ENCODE measurements at regions of chr20 and their contacts with region 1.

Region 1: GRCh38 chr20:4607287-4607713 is 114.4 kb upstream of the PRND start:
- DNase-seq: no peak
- ATAC-seq: peak; percentile 84 to 93 (median 88)
- H3K4me3 ChIP-seq: peak overlapping the region; percentile 19
- H3K27ac ChIP-seq: no peak overlapping the region
- H3K4me1 ChIP-seq: no peaks in the 10 kb centered on the region
- H3K27me3 ChIP-seq: peaks cover 0 to 18% (median 1%) of the 10 kb centered on the region in 3 donors
- CTCF ChIP-seq: peak; percentile 95

Region 2: DNA sequence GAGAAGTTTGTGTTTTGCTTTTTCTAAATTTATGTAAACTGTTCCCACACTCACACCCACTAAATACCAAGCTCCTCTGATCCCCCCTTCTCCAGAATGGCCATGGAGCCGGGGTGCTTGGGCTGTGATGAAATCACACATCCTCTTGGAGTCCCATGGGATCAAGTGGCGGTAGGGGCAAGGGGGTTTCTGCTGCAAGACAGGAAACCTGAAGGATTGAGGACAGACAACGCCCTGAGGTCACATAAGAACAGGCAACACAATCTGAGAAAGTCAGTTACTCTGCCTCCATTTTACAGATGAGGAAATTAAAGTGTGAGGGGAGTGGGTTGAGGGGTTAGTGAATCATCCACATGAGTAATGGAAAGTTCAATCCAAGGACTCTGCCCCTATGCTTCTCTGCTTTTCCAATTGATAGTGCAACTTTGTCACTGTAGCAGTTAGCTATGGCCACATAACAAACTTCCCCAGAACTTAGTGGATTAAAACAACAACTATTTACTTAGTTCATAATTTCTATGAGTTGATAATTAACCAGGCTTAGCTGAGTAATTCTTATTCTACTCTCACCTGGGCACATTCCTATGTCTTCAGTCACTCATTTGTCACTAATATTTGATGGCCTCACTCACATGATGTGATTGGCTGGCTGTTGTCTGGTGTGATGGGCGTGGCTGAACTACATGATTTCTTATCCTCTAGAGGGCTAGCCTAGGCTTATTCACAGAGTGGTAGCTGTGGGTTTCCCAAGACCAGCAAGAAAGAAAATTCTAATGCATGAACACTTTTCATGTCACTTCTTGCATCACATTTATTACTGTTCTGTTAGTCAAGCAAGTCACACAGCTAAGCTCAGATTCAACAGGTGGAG is 280.9 kb before region 1 on chr20:
- intact Hi-C with region 1: no loop called
- DNase-seq: no peak
- ATAC-seq: no peak
- H3K4me3 ChIP-seq: no peak overlapping the region
- H3K27ac ChIP-seq: no peak overlapping the region
- H3K4me1 ChIP-seq: no peaks in the 10 kb centered on the region
- H3K27me3 ChIP-seq: no peaks in the 10 kb centered on the region
- CTCF ChIP-seq: no peak

Region 3: DNA sequence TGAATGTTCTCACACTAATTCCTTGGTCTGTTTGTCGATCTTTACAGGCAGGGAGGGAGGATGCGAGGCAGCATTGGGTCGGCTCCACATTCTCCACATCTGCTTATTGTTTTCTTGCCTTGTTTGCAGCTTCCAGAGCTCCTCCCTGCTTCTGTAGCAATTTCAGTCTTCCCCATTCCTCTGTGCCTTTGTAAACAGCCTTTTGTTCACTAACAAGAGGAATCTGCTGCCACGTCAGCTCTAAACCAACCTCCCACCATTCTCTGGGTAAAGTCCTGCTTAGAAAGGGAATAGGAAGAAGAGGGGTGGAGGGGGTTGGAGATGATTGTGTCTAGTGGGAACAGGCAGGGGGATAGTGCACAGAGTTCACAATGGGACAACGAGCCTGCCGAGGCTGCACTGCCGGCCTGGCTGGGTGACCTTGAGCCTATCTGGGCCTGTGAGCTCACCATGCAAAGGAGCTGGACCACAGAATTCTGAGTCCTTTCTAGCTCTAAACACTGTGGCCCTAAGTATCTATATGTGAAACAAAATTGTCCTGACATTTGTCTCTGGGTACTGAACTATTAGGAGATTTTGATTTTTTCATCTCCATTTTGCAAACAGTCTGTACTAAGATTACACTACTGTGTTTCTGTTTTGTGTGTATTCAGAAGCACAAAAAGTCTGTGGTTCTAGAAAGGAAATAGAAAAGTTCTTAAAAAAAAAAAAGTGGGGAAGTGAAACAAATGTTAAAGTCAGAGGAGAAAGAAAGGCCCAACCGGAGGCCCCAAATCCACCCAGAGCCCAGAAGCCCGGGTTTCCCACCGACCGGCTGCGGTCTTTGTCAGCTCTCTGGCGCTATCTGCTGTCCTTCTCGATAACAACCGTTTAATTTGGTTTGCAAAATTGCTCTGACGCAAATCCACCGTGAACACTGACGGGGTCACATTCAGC is 113.0 kb after region 1 on chr20:
- intact Hi-C with region 1: loop called (anchors 1 to 2 kb)
- DNase-seq: peak; percentile 69 to 81
- ATAC-seq: peak; percentile 84 to 95 (median 88)
- H3K4me3 ChIP-seq: peak overlapping the region; percentile 8
- H3K27ac ChIP-seq: no peak overlapping the region
- H3K4me1 ChIP-seq: no peaks in the 10 kb centered on the region
- H3K27me3 ChIP-seq: no peaks in the 10 kb centered on the region
- CTCF ChIP-seq: peak; percentile 81

Region 4: DNA sequence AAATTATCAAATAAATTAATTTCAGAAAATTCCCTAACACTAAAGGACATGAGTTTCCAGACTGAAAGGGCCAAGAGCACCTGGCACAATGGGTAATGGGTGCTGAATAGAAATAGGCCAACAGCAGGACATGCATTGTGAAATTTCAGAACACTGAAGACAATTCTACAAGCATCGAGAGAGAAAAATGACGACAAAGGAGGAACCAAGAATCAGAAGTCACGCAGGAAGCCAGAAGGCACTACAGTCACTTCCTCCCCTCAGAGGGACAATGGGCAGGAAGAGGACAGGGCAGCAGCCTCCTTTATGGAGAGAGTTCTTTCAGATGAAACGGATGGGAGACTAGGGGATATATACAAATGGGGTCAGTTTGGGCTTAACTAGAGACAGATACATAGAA is 482.9 kb after region 1 on chr20:
- intact Hi-C with region 1: loop called in 1 of 2 experiments (anchors 10 kb)
- DNase-seq: no peak
- ATAC-seq: peak in 2 of 4 donors; percentile 27 to 32
- H3K4me3 ChIP-seq: no peak overlapping the region
- H3K27ac ChIP-seq: no peak overlapping the region
- H3K4me1 ChIP-seq: no peaks in the 10 kb centered on the region
- H3K27me3 ChIP-seq: no peaks in the 10 kb centered on the region
- CTCF ChIP-seq: no peak

Measured in psoas muscle (tissue), 8 donors.